ENCODE measurements at regions of chr13 and their contacts with region 1.

Region 1: DNA sequence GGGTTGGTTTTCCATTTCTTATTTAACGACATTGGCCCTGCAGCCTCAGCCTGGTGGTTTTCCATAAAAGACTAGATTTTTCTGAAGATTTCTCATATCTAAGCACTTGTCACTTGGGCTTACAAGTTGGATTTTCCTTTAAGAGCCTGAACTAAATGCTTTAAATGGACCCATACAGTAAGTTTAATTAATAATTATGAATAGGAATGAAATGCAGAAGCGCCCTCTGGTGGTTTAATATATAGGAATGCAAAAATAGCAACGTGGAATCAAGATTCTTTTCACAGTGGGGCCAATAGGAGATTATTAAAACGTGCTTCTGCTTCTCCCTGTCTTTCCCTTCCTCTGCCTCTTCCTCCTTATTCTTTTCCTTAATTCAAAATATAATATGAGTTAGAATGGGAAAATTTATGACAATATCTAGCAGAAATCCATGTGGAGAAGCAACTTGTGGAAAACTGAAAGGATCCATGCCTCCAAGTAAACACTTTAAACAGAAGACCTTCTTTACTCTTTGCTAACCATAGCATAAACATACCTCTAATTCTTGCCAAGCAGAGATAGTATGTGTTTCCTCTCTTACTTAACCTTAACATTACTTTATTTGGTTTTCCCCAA is 324.0 kb downstream of the GPC5 start:
- DNase-seq: no peak
- ATAC-seq: no peak
- H3K4me3 ChIP-seq: no peak overlapping the region
- H3K27ac ChIP-seq: no peak overlapping the region
- H3K4me1 ChIP-seq: no peaks in the 10 kb centered on the region
- H3K27me3 ChIP-seq: peaks cover 0 to 3% (median 0%) of the 10 kb centered on the region in 9 donors
- CTCF ChIP-seq: peak; percentile 42 to 69 (median 58)
- POLR2A ChIP-seq: no peak

Region 2: DNA sequence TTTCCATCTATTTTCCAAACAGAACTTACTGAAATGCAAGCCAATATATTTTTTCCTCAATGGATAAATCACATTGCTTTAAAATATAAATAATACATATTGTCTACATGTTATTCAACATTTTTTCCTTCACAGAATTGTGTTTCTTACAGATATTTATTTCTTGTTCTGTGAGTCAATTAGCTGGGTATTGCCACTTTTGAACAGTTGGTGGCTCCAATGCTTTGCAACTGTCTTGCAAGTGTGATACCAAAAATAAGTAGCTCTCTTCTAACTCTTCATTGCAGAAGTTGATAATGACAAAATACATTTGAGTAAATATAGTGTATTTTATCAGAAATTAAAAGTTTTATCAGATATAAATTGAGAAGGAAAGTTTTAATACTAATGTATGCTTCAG is 341.0 kb before region 1 on chr13:
- intact Hi-C with region 1: loop called (anchors 1 to 10 kb)
- DNase-seq: no peak
- ATAC-seq: no peak
- H3K4me3 ChIP-seq: no peak overlapping the region
- H3K27ac ChIP-seq: no peak overlapping the region
- H3K4me1 ChIP-seq: no peaks in the 10 kb centered on the region
- H3K27me3 ChIP-seq: peaks cover 0 to 4% (median 0%) of the 10 kb centered on the region in 9 donors
- CTCF ChIP-seq: peak in 11 of 12 donors; percentile 22 to 50 (median 26)
- POLR2A ChIP-seq: no peak

Region 3: DNA sequence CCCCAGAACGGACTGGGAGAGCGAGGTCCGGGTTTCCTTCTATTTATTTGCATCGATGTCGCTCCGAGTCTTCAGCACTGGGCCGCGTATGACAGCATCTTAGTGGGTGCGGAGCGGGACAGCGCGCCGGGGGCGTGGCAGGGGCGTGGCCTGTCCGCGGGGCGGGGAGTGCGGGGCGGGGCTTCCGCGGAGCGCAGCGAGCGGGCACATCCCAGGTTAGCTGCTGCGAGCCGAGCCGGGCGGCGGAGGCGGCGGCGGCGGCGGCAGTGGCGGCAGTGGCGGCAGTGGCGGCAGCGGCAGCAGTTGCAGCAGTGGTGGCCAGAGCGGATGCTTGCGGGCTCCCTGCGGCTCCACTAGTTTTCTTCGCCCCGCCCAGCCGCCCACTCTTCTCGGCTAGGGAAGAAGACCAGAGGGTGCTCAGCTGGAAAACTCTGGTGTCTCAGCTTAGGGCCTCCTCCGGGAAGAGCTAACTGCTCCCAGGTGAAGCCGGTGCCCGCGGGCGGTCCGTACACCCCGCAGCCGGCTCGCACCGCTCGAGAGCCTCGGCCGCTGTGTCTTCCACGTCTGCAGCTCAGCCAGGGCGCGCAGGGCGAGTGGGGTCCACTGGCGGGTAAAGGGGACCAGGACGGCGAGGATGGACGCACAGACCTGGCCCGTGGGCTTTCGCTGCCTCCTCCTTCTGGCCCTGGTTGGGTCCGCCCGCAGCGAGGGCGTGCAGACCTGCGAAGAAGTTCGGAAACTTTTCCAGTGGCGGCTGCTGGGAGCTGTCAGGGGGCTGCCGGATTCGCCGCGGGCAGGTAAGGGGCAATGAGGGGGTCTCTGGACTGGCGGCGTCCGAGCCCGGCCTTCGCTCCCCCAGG is 323.7 kb before region 1 on chr13 and contains the start of gene GPC5:
- intact Hi-C with region 1: loop called in 1 of 10 experiments (anchors 5 kb)
- DNase-seq: peak; percentile 59 to 88 (median 72)
- ATAC-seq: peak; percentile 75 to 100 (median 98)
- H3K4me3 ChIP-seq: peak within 1 kb of the TSS; percentile 30 to 64 (median 51)
- H3K27ac ChIP-seq: no peak within 1 kb of the TSS
- H3K4me1 ChIP-seq: peaks cover 0 to 20% (median 12%) of the 10 kb centered on the region in 12 donors
- H3K27me3 ChIP-seq: peaks cover 5 to 76% (median 18%) of the 10 kb centered on the region in 9 donors
- CTCF ChIP-seq: no peak
- POLR2A ChIP-seq: peak in 1 of 2 donors; percentile 25
- total RNA-seq, gene GPC5: 0.14 to 2.9 (median 0.91) TPM

Region 4: GRCh38 chr13:91698767-91699166 is 23.6 kb before region 1 on chr13:
- intact Hi-C with region 1: loop called in 1 of 10 experiments (anchors 1 kb)
- DNase-seq: no peak
- ATAC-seq: no peak
- H3K4me3 ChIP-seq: no peak overlapping the region
- H3K27ac ChIP-seq: no peak overlapping the region
- H3K4me1 ChIP-seq: no peaks in the 10 kb centered on the region
- H3K27me3 ChIP-seq: no peaks in the 10 kb centered on the region
- CTCF ChIP-seq: no peak
- POLR2A ChIP-seq: no peak

Measured in heart left ventricle (tissue), 16 donors.